ENCODE measurements at regions of chr2 and their contacts with region 1.

Region 1: GRCh38 chr2:20561701-20562454 is 89.0 kb downstream of the HS1BP3 start:
- DNase-seq: no peak
- H3K4me3 ChIP-seq: no peak overlapping the region
- H3K27ac ChIP-seq: no peak overlapping the region
- H3K4me1 ChIP-seq: peaks cover 0 to 2% of the 10 kb centered on the region in 2 donors
- H3K27me3 ChIP-seq: no peaks in the 10 kb centered on the region
- CTCF ChIP-seq: no peak

Region 2: GRCh38 chr2:20164061-20164733 is 397.7 kb before region 1 on chr2:
- intact Hi-C with region 1: no loop called
- DNase-seq: no peak
- H3K4me3 ChIP-seq: no peak overlapping the region
- H3K27ac ChIP-seq: no peak overlapping the region
- H3K4me1 ChIP-seq: no peaks in the 10 kb centered on the region
- H3K27me3 ChIP-seq: no peaks in the 10 kb centered on the region
- CTCF ChIP-seq: no peak

Region 3: DNA sequence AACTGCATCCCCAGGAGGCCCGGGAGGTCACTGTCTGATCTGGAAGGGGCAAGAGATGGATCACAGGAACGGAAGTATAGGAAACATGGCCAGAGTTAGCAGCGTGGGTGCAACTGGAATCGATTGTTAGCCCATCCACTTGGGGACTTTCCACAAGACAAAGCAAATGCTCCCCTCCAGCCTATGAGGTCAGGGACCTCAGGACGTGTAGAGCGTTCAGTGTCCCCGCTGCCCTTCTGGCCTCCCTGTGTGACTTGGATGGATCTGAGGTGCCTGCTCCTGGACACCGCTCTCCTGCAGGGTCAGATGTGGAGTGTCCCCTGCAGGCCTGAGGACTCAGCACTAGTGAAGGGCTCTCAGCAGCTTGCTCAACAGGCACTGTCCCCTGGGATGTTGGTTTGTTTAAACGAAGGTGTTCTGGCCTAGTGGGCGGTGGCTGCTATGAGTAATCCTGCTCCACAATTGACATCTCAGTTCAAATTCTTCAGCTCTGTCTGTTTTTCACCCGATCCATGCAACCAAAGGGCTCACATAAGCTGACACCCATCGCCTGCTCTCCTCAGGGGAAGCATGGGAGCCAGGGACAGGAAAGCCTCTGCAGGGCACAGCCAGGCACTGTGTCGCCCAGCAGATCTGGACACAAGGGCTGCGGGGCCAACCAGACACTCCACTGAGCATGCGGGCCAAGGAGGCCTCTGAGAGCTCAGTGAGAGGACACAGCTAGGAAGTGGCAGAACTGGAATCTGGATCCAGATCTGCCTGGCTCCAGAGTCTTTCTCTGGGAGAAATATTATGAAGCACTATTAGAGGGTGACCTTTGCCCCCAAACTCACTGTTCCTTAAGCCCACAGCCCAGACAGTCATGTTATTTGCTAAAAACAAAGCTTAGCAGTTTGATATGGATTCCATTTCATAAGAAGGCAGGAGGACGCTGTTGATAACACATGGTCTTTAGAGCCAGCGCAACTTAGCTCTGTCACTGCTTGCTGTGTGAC is 36.5 kb before region 1 on chr2:
- intact Hi-C with region 1: loop called (anchors 5 kb)
- DNase-seq: peak in 1 of 2 donors; percentile 78
- H3K4me3 ChIP-seq: no peak overlapping the region
- H3K27ac ChIP-seq: peak overlapping the region; percentile 19 to 34
- H3K4me1 ChIP-seq: peaks cover 0 to 9% of the 10 kb centered on the region in 2 donors
- H3K27me3 ChIP-seq: no peaks in the 10 kb centered on the region
- CTCF ChIP-seq: no peak

Measured in ascending aorta (tissue), 2 donors.